ENCODE measurements at regions of chr1 and their contacts with region 1.

Region 1: GRCh38 chr1:2061065-2061778 is 11.0 kb downstream of the PRKCZ start:
- ATAC-seq: peak in 3 of 8 experiments; percentile 18 to 22 (median 22)
- H3K4me3 ChIP-seq: no peak overlapping the region
- H3K27ac ChIP-seq: no peak overlapping the region
- H3K4me1 ChIP-seq: no peaks in the 10 kb centered on the region

Region 2: DNA sequence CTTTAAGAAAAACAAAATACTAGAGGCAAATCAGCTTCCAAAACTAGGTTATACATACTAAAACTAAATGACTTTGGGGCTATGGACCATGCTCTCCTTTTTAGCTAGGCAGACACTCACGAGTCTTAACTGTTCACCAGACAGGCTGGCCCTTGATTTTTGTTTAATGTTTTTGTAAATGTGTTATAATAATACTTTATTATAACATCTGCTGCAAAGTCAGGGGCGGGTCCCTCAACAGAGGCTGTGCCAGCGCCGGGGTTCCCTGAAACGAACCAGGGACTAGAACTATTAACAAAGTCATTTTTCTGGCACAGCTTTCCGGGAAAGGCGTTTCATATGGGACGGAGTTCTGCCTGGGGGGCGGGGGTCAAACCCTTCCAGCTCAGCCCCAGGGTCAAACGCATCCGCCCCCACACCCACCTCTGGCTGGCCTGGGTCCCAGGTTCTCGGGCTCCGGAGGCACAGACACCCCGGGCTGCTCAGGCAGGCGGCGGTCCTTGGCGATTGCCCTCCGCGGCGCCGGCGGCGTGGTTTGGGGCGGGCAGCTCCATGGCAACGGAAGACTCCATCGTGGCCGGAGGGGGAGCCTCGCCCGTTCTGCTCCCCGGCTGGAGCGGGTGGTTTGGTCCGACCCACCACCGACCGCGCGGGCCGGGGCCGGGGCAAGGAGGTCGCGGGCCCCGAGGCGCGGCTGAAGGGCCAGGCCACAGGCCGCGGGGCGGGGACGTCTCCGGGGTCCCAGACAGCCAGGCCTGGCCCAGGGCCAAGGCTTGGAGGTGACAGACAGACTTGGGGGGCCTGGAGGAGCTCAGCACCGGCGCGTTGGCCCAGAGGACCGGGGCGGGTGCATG is 57.7 kb before region 1 on chr1 and contains the start of gene CFAP74:
- in situ Hi-C with region 1: loop called in 1 of 9 experiments (anchors 10 kb)
- ATAC-seq: peak; percentile 64 to 99 (median 97)
- H3K4me3 ChIP-seq: peak within 1 kb of the TSS; percentile 16 to 36 (median 22)
- H3K27ac ChIP-seq: no peak within 1 kb of the TSS
- H3K4me1 ChIP-seq: peaks cover 7 to 15% of the 10 kb centered on the region in 2 donors
- total RNA-seq, gene CFAP74: 0.22 to 3.7 (median 0.46) TPM in 7 of 8 experiments, not detected in the other

Measured in motor neuron (in vitro differentiated cells).